ENCODE measurements at regions of chr7 and their contacts with region 1.

Region 1: DNA sequence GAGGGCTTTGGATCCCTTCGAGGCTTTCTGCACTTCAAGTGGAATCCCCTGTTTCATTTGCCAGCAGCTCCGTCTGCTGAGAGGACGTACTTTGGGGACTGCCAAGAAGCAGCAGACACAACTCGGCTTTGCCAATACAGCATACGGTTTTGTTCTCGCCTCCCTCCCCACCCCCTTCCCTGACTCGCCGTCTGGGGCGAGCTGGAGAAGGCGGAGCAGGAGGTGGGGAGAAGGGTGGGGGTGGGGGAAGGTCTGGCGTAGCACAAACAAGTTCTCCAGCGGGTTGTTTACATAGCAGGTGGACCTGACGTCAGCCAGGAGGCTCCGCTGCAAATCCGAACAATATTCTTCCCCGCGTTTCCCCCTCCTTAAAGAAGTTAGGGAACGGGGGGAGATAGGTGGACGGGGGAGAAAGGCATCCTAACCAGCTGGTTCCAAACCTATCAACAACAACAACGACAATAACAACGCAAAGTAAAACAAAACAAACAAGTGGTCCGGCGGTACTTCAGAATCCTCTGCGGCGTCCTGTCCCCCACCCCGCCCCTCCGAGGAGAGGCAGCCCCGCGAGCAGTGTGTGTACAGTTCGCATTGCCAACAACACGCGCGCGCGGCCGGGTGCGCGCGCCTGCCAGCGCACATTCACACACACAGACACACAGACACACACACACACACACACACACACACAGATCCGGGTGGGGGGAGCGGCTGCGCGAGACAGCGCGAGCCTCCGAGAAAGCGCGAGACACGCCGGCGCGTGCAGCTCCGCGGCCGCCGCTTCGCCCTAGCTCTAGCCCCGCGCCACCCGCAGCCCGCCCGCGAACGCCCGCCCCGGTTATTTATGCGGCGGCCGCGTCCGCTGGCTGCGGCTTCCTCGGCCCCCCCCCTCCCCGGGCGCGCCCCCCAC is 167.0 kb upstream of the PPP1R3A start:
- DNase-seq: peak; percentile 36 to 81 (median 64)

Region 2: DNA sequence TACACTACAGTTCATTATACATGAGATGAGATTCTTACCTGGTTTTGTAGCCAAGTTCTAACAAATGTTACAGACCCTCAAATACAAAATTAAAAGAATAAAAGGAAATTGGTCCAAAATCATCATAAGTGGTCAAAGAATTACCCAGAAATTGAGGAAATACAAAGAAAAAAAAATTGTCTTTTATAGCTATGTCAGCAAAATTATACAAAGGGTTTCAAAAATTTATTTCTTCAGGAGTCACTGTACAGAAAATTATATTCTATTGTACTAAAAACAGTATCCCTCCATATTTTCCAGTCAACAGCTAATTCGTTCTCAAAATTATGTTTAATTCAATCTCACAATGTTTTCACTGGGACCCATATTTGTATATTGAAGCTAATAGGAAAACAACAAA is 181.3 kb before region 1 on chr7:
- intact Hi-C with region 1: no loop called
- DNase-seq: no peak

Region 3: GRCh38 chr7:113986209-113986608 is 99.6 kb before region 1 on chr7:
- intact Hi-C with region 1: no loop called
- DNase-seq: no peak

Region 4: GRCh38 chr7:114196517-114196916 is 110.7 kb after region 1 on chr7:
- intact Hi-C with region 1: no loop called
- DNase-seq: no peak

Region 5: GRCh38 chr7:114414156-114415063 is 328.6 kb after region 1 on chr7 and contains the start of gene FOXP2:
- intact Hi-C with region 1: loop called (anchors 10 kb)
- DNase-seq: no peak